ENCODE measurements at regions of chr1 and their contacts with region 1.

Region 1: DNA sequence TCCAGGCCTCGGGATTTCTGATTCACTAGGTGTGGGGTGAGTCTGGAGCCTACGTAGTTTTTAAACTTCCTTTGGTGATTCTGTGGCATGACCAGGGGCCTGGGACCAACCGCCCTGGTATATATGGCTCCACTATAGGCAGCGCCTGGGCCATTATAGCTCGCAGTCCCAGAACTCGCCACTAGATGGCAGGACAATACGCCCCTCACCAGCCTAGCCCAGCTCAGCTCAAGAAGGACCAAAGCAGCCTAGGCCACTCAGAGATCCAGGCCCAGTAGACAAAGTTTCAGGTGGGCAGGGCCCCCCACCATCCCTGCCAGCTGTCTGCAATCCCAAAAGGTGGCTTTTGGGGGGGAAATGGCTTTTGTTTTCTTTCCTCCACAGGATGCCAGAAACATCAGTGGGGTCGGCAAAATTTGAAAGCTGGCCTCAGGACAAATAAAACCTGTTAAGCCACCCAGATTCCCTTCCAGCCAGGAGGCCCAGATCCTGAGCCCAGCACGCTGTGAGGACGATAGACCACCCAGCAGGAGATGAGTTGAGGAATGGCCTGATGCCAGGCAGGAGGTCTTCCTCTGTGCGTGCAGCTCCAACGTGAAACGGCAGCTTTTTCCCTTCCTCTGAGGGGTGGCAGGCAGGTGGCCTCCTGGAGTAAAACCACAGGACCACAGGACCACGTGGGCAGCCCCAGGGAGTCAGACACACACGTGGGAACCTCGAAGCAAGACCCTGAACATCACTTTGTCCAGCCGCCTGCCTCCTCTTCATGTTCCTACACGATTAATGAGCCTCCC is 24.8 kb upstream of the TMEM51 start:
- DNase-seq: peak; percentile 51 to 92 (median 79)
- H3K4me3 ChIP-seq: no peak overlapping the region
- H3K27ac ChIP-seq: no peak overlapping the region
- H3K4me1 ChIP-seq: no peaks in the 10 kb centered on the region
- H3K27me3 ChIP-seq: no peaks in the 10 kb centered on the region
- CTCF ChIP-seq: peak; percentile 84 to 94 (median 91)
- POLR2A ChIP-seq: no peak

Region 2: DNA sequence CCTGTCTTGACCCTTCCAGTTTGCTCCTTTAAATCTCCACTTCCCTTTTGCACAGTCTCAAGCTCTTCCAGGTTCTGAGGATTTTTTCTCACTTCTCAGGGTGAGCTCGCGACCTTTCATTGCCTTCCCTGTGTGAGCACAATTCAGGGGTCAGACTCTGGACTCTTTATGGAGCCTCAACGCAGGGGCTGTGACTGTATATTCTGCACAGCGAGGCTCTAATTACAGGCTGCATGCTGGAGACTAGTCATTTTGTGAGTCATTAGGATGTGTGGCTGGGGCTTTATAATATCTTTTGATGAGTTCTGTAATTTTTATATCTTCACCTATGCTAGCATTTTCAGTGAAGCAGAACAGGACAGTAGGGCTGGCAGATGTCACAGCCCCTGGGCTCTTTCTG is 259.5 kb before region 1 on chr1:
- intact Hi-C with region 1: no loop called
- DNase-seq: no peak
- H3K4me3 ChIP-seq: no peak overlapping the region
- H3K27ac ChIP-seq: no peak overlapping the region
- H3K4me1 ChIP-seq: no peaks in the 10 kb centered on the region
- H3K27me3 ChIP-seq: no peaks in the 10 kb centered on the region
- CTCF ChIP-seq: no peak
- POLR2A ChIP-seq: no peak

Region 3: GRCh38 chr1:15304701-15305467 is 176.2 kb after region 1 on chr1:
- intact Hi-C with region 1: loop called (anchors 5 to 10 kb)
- DNase-seq: peak; percentile 50 to 81 (median 72)
- H3K4me3 ChIP-seq: no peak overlapping the region
- H3K27ac ChIP-seq: no peak overlapping the region
- H3K4me1 ChIP-seq: peaks cover 0 to 4% of the 10 kb centered on the region in 2 donors
- H3K27me3 ChIP-seq: no peaks in the 10 kb centered on the region
- CTCF ChIP-seq: peak; percentile 85 to 97 (median 88)
- POLR2A ChIP-seq: no peak

Measured in adrenal gland (tissue), 19 donors.